Ascending aorta (tissue), 2 donors: ENCODE measurements at regions of chr12 and their contacts with region 1.

Region 1: GRCh38 chr12:100142851-100143559 is at the start of gene BLTP3B:
- DNase-seq: peak; percentile 67 to 96
- H3K4me3 ChIP-seq: peak within 1 kb of the TSS; percentile 86 to 93
- H3K27ac ChIP-seq: peak within 1 kb of the TSS; percentile 99 to 100
- H3K4me1 ChIP-seq: peaks cover 0 to 24% of the 10 kb centered on the region in 2 donors
- H3K27me3 ChIP-seq: no peaks in the 10 kb centered on the region
- CTCF ChIP-seq: no peak
- total RNA-seq, gene BLTP3B: 18.8 TPM

Region 2: DNA sequence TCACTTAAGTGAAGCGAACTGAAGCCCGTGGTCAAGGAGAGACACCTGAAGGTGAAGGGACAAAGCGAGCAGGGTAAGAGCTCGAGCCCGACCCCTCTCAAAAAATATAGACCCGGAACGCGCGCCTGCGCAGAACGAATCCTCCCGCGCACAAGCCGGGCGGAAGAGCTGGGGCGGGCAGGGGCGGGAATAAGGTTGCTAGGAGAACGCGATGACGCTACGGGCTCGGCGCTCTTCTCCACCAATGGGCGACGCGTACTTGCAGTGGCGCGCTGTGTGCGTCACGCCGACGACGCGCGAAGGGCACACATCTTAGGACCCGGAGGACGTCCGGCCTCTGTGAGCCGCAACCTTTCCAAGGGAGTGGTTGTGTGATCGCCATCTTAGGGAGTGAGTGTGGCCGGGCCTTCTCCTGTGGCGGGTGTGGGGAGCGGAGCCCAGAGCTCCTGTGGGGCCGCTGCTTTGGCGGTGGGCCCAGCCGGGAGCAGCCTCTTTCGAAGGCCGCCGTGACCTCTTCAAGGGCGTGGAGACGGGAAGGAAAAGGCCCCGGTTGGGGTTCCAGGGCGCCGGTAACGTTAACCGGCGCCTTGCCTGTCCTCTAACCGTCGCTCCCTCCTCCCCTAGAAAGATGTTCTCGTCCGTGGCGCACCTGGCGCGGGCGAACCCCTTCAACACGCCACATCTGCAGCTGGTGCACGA is 1549.5 kb before region 1 on chr12 and contains the start of gene SLC25A3:
- intact Hi-C with region 1: loop called (anchors 5 kb)
- DNase-seq: peak; percentile 92 to 98
- H3K4me3 ChIP-seq: peak within 1 kb of the TSS; percentile 91 to 99
- H3K27ac ChIP-seq: peak within 1 kb of the TSS; percentile 97 to 98
- H3K4me1 ChIP-seq: peaks cover 0 to 11% of the 10 kb centered on the region in 2 donors
- H3K27me3 ChIP-seq: no peaks in the 10 kb centered on the region
- CTCF ChIP-seq: no peak
- total RNA-seq, gene SLC25A3: 437 TPM

Region 3: DNA sequence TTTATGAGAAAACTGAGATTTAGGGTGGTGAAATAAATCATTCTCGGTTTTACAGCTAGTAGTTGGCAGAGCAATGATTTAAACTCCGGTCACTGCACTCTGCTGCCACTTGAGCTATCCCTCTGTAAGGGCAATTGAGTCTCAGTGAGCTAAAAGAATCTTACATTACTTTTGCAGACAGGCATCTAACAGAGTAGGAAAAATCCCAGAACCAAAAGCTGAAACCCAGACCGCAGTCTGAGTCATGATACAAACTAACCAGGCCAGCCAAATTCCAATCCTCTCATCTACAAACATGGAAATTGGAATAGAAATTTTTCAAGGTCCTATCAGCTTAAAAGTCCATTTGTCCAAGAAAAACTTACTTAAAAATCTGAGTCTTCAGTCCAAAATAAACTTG is 231.9 kb before region 1 on chr12:
- intact Hi-C with region 1: loop called (anchors 10 kb)
- DNase-seq: peak; percentile 10 to 82
- H3K4me3 ChIP-seq: peak overlapping the region; percentile 28 to 48
- H3K27ac ChIP-seq: peak overlapping the region; percentile 68 to 72
- H3K4me1 ChIP-seq: peaks cover 3 to 20% of the 10 kb centered on the region in 2 donors
- H3K27me3 ChIP-seq: no peaks in the 10 kb centered on the region
- CTCF ChIP-seq: peak in 1 of 3 experiments; percentile 6

Region 4: GRCh38 chr12:100266835-100267618 is 124.0 kb after region 1 on chr12 and contains the starts of genes DEPDC4 and SCYL2:
- intact Hi-C with region 1: loop called (anchors 1 kb)
- DNase-seq: peak; percentile 92 to 98
- H3K4me3 ChIP-seq: peak within 1 kb of the TSS; percentile 95 to 100
- H3K27ac ChIP-seq: peak within 1 kb of the TSS; percentile 97 to 98
- H3K4me1 ChIP-seq: peaks cover 0 to 22% of the 10 kb centered on the region in 2 donors
- H3K27me3 ChIP-seq: no peaks in the 10 kb centered on the region
- CTCF ChIP-seq: no peak
- total RNA-seq, gene DEPDC4: not detected
- total RNA-seq, gene SCYL2: 11.6 TPM

Region 5: DNA sequence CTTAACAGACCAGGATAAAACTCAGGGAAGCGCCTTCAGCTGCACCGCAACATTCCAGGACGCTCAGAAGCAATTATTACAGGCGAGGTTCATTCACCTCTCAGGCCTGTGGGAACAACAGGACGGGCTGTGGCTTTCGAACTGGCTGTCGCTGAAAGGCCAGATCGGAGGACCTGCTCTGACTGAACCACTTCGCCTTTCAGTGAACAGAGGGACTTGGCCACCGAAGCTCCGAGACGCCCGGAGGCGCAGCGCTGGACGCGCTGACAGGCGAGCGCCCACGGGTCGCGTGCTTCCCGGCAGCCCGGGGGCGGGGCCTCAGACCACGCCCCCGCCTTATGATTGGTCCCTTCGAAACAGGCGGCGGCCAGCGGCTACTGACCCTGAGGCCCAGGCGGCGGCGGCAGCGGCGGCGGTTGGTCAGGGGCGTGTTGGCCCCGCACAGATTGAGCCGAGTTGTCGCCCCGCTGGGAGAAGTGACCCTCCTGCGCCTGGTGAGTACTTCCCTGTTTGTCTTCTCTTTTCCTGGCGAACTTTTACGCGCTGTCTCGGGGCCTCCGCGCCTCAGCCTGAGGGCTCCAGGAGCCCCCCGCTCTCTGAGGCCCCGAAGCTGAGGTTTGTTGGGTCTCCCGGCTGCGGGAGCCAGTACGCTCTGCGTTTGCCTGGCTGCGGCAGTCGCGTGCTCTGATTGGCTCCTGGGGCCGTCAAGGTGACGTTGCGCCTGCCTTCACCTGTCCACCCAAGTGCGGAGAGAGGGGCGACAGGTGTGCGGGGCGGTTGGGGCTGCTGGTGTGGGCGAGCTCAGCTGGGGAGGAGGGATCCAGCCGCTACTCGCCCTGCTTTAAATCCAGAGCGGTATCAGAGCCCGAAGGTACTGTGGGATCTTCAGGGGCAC is 430.5 kb after region 1 on chr12 and contains the start of gene GAS2L3:
- intact Hi-C with region 1: loop called (anchors 5 kb)
- DNase-seq: peak; percentile 72 to 92
- H3K4me3 ChIP-seq: peak within 1 kb of the TSS; percentile 71 to 83
- H3K27ac ChIP-seq: peak within 1 kb of the TSS; percentile 39 to 51
- H3K4me1 ChIP-seq: peaks cover 0 to 11% of the 10 kb centered on the region in 2 donors
- H3K27me3 ChIP-seq: no peaks in the 10 kb centered on the region
- CTCF ChIP-seq: no peak
- total RNA-seq, gene GAS2L3: not detected